ENCODE measurements at regions of chr21 and their contacts with region 1.

Region 1: DNA sequence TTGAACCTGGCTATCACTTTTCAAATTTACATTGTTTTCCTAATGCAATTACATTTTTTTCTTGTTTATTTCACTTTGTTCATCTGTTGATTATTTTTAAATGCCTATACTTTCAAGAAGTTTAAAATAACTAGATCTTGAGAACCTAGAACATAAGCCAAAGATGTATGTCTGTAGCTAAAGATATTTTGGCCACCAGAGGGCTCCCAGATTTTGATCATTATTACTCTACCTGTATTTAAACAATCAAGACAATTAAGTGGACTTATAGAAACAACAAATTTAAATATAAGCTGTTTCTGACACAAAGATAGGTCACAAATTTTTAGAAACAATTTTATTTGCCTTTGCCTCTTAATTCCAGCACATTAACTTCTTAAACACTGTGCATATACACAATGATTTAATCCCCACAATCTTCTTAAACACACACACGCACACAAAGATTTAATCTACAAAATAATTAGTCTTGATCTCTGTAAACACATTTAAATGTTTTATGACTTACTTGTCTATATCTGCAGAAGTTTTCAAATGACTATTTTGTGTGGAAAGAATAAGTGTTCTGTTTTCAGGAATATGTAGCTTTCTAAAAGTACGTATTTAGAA is 380.0 kb downstream of the DSCAM start:
- DNase-seq: no peak
- ATAC-seq: no peak
- H3K4me3 Mint-ChIP-seq: no peak overlapping the region
- H3K27ac Mint-ChIP-seq: no peak overlapping the region
- H3K4me1 Mint-ChIP-seq: no peaks in the 10 kb centered on the region
- H3K27me3 Mint-ChIP-seq: no peaks in the 10 kb centered on the region
- CTCF ChIP-seq: no peak

Region 2: DNA sequence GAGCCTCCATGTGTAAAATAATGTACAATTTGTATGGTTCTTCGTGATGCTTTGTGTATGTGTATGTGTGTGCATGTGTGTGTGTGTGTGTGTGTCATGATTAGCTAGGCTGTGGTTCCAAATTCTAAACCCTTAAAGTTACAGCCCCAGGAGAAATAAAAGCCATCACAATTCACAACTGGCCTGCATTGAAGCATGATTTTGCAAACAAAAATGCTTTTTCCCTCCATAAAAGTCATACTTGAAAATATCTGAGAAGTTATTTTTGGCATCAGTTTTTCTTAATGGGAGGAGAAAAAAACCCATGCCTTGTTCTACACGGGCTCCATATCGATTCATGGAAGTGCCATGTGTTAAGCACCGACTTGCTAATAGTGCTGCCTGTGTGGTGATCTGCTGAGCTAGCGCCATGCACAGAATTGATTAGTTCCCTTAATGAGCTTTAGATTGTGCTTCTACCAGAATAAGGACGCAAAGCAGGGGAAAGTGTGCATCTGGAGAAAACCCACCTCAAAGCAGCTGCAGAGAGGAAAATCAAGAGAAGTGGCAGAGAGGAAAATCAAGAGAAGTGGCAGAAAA is 172.7 kb after region 1 on chr21:
- CTCF ChIA-PET with region 1: no interaction called
- POLR2A ChIA-PET with region 1: no interaction called
- intact Hi-C with region 1: no loop called
- DNase-seq: no peak
- ATAC-seq: no peak
- H3K4me3 Mint-ChIP-seq: no peak overlapping the region
- H3K27ac Mint-ChIP-seq: no peak overlapping the region
- H3K4me1 Mint-ChIP-seq: no peaks in the 10 kb centered on the region
- H3K27me3 Mint-ChIP-seq: no peaks in the 10 kb centered on the region
- CTCF ChIP-seq: no peak

Region 3: DNA sequence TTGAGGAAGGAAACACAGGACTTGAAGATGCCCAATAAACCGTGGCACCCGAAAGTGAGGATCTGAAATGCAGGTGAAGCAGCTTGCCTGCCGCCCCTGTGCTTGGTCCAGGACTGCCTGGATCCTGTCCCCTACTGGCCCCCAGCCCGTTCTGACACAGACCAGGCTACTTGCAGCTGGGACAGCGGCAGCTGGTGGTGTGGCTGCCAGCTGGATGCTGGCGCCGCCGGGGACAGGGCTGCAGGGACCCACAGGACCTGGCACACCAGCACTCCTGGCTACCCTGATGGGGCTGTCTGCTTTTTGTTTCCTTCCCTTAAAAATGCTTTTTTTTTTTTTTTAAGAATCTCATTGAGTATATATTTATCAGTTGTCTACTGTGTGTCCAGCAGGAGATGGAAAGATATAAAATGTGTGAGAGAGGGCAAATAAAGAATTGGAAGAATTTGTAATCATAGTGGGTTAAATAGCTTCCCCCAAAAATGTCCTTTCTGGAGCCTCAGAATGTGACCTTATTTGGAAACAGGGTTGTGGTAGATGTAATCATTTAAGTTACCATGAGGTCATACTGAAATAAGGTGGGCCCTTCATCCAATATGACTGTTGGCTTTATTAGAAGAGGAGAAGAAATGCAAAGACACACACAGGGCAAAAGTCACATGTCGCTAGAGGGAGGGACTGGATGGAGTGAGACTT is 214.3 kb after region 1 on chr21:
- CTCF ChIA-PET with region 1: no interaction called
- POLR2A ChIA-PET with region 1: no interaction called
- intact Hi-C with region 1: no loop called
- DNase-seq: no peak
- ATAC-seq: no peak
- H3K4me3 Mint-ChIP-seq: no peak overlapping the region
- H3K27ac Mint-ChIP-seq: no peak overlapping the region
- H3K4me1 Mint-ChIP-seq: no peaks in the 10 kb centered on the region
- H3K27me3 Mint-ChIP-seq: no peaks in the 10 kb centered on the region
- CTCF ChIP-seq: no peak

Region 4: GRCh38 chr21:41068967-41069642 is 602.1 kb after region 1 on chr21:
- CTCF ChIA-PET with region 1: no interaction called
- POLR2A ChIA-PET with region 1: no interaction called
- intact Hi-C with region 1: loop called (anchors 5 kb)
- DNase-seq: peak; percentile 34
- ATAC-seq: peak; percentile 50
- H3K4me3 Mint-ChIP-seq: peak overlapping the region; percentile 58
- H3K27ac Mint-ChIP-seq: no peak overlapping the region
- H3K4me1 Mint-ChIP-seq: peaks cover 14% of the 10 kb centered on the region
- H3K27me3 Mint-ChIP-seq: peaks cover 28% of the 10 kb centered on the region
- CTCF ChIP-seq: peak; percentile 25

Measured in activated B cell treated with CpG ODN at 0.5 μM for 24 hours (primary cell).